ENCODE measurements at regions of chr1 and their contacts with region 1.

Region 1: DNA sequence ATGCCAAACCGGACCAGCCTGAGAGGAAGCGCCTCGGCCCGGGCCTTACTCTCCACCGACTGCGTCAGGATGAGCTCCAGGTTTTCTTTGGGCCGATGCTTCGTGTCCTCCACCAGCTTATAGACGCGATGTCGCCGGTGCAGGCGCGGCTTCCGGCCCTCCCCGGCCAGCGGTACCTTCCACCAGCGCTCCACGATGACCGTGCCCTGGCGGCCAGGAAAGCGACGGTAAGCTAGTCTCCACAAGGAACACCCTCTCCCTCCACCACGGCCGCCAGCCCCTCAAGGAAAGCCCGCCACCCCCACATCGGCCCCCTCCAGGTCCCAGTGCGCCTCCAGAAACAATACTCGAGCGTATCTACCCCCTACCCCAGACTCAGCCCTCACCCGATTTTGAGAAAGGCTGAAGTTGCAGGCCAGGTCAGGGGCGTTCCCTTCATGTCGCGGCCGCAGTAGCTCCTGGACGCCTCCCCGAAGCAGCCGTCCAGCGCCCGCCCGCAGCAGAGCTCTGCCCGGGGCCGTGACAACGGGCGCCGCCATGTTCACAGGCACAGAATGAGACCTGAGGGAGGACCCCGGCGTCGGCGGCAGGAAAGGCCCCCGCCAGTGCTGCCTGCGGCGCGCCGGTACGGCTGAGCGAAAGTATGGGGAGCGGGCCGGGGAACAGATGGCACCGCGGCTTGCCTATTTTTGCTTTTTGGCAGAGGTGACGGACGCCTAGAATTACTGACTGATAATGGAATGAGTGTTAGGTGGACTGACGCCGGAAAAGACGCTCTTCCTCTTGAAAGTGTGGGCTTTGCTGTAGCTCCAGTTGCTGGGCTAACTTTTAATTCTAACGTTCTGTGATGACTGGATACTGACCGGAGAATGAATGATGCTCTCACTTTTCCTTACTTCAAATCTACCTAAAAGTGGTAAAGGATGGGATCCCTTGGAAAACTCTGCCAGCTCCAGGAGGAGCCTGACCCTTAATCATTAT is at the start of gene MRPL9:
- DNase-seq: peak; percentile 88
- ATAC-seq: peak; percentile 99
- H3K4me3 Mint-ChIP-seq: peak within 1 kb of the TSS; percentile 86
- H3K27ac Mint-ChIP-seq: peak within 1 kb of the TSS; percentile 95
- H3K4me1 Mint-ChIP-seq: peaks cover 15% of the 10 kb centered on the region
- H3K27me3 Mint-ChIP-seq: no peaks in the 10 kb centered on the region
- total RNA-seq, gene MRPL9: 87.4 to 95.0 TPM

Region 2: GRCh38 chr1:151692226-151692625 is 71.0 kb before region 1 on chr1:
- POLR2A ChIA-PET with region 1: no interaction called
- DNase-seq: no peak
- ATAC-seq: no peak
- H3K4me3 Mint-ChIP-seq: no peak overlapping the region
- H3K27ac Mint-ChIP-seq: no peak overlapping the region
- H3K4me1 Mint-ChIP-seq: no peaks in the 10 kb centered on the region
- H3K27me3 Mint-ChIP-seq: no peaks in the 10 kb centered on the region

Region 3: DNA sequence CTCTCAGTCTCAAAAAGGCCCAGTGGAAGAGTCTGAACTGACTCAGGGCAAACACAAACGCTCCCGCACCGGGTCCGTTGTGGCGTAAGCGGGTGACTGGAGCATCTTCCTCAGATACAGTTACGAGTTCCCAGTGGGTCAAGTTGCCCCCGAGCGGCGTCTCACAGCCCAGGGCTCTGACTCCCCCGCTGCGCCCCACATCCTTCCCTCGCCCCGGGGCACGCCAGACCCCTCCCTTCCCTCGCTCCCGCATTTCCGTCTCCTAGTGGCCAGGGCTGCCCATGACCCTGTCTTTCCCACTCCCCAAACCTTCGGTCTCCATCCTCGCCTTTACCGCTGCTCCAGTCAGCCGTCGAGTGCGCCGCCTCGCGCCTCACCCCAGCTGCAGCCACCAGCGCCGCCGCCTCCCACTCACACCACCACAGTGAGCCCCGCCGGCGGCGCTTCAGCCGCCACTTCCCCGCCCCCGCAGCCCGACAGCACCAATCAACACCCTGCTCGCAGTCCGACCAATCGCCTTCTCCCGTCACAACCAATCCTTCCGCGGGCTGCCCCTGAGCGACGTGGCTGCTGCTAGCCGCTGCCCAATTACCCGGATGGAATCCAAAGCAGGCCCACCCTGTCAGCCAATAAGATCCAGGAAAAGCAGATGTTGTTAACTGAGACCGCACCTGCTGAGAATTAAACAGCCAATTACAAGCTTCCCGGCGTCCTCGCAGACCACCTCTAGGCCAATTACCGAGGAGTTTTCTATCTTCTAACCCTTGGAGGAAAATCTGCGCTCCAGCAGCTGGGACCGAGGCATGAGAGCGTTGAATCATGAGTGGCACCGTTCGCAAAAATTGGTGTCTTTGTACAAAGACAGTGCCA is 27.1 kb after region 1 on chr1 and contains the start of gene TDRKH:
- POLR2A ChIA-PET with region 1: interaction called, 17 read pairs
- DNase-seq: peak; percentile 95
- ATAC-seq: peak; percentile 97
- H3K4me3 Mint-ChIP-seq: peak within 1 kb of the TSS; percentile 92
- H3K27ac Mint-ChIP-seq: peak within 1 kb of the TSS; percentile 90
- H3K4me1 Mint-ChIP-seq: peaks cover 16% of the 10 kb centered on the region
- H3K27me3 Mint-ChIP-seq: no peaks in the 10 kb centered on the region
- total RNA-seq, gene TDRKH: 15.9 to 16.1 TPM

Measured in activated naive CD8-positive, alpha-beta T cell treated with anti-CD3 and anti-CD28 coated beads, Interleukin-2, amount 10 ng/mL, durations not matched to agents 7 days and 5 days (primary cell).